ENCODE measurements at regions of chr10 and their contacts with region 1.

Region 1: DNA sequence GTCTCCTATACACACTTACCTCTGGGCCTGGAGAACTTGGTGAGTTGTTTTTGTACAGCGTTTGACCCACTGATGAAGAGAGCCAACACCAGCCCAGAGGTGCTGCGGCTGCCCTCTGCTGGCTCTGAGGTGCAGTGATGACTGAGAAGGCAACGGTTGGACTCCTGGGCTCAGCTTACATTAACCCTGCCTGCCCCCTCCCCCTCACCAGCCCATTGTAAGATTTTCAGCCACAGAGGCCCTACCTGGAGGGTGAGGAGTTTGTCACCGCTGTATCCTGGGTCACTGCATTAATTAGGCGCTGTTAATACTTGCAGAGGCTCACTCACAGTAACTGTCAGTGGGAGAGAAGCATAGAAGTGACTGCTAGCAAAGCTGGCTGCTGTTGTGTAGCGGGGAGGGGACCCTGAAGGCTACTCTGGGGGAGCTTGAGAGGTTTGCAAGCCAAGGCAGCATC is 19.0 kb upstream of the ANKRD2 start:
- DNase-seq: no peak
- H3K4me3 ChIP-seq: no peak overlapping the region
- H3K27ac ChIP-seq: no peak overlapping the region
- H3K27me3 ChIP-seq: no peaks in the 10 kb centered on the region
- CTCF ChIP-seq: peak; percentile 94

Region 2: DNA sequence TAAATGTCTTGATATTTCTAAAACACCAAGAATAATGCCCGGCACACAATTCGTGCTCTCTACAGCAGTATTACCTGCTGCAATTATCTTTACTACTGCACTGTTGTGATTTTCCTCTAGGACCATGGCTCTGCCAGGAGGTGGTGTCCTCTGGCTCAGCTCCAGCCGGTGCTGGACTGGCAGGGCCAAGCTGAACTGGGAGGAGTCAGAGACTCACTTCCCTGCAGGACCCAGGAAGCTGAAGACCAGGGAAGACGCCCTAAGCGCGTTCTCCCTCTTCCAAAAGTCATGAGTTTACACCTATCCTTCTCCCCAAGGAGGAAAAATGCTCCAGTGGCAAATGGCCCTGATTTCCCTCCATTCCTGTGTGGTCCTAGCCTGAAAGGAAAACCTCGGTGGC is 383.3 kb before region 1 on chr10:
- CTCF ChIA-PET with region 1: no interaction called
- POLR2A ChIA-PET with region 1: no interaction called
- DNase-seq: no peak
- H3K4me3 ChIP-seq: no peak overlapping the region
- H3K27ac ChIP-seq: no peak overlapping the region
- H3K27me3 ChIP-seq: peaks cover 18% of the 10 kb centered on the region
- CTCF ChIP-seq: no peak

Region 3: GRCh38 chr10:97463363-97464132 is 90.1 kb before region 1 on chr10:
- CTCF ChIA-PET with region 1: interaction called, 44 read pairs
- POLR2A ChIA-PET with region 1: interaction called, 4 read pairs
- DNase-seq: no peak
- H3K4me3 ChIP-seq: no peak overlapping the region
- H3K27ac ChIP-seq: peak overlapping the region; percentile 61
- H3K27me3 ChIP-seq: no peaks in the 10 kb centered on the region
- CTCF ChIP-seq: peak; percentile 88

Region 4: DNA sequence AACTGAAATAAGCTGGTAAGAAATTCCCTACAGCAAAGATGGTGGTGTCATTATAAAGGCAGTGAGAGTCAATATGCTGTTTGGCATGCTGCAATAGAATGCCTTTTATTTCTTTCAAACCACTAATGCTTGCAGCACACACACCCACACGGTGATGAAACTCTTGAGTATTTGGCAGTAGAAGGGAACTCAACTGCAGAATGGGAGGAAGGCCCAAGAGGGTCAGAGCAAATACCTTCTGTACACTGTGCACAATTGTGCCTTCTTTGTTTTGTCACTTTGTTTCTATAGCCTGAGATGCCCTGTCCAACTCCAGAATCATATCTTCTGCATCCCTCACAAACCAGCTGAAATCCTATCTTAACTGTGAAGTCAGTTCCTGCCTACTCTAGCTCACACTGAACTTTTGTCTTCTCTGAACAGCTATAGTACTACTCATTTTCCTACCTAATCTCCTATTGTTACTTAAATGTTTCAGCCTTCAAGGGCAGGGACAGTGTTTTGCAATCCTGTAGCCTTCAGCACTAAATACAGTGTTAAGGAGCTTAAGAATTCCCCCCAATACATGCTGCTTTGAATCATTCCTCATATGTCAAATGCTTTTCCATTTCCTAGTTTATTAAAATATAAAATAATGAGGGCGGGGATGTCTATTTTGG is 77.5 kb before region 1 on chr10:
- CTCF ChIA-PET with region 1: interaction called, 14 read pairs
- POLR2A ChIA-PET with region 1: no interaction called
- DNase-seq: no peak
- H3K4me3 ChIP-seq: no peak overlapping the region
- H3K27ac ChIP-seq: no peak overlapping the region
- H3K27me3 ChIP-seq: no peaks in the 10 kb centered on the region
- CTCF ChIP-seq: no peak

Region 5: DNA sequence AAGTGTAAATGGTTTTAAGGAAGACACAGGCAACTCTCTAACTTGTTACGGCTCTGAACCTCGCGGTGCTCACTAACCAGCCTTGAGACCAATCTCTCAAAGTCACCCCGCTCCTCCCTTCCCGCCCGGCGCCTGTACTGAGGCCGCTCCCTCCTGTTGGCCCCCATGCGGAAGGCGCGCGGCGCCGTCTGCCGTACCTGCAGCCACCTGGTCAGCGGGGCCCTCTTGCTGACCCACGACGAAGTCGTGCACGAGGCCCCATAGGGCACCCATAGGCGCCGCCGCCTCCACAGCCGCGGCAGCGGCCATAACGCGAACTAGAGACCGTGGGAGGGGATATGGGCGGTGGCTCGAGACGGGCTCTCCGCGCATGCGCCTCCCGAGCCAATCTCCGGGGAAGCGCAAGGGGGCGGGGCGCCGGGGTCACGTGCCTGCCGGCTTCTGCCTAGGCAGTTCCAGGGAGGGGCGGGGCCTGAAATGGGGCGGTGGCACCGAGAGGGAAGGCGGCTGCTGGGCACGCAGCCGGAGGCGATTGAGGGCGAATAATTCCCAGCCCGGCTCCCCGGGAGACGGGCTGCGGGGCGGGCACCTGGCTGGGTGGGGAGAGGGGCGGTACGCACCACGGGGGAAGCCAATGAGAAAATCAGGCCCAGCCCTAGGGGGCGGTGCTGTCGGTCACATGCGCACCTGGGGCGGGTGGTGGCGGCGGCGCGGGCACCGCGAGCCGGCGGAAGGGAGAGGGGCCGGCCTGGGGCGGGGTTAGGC is 55.3 kb before region 1 on chr10 and contains the start of gene MMS19:
- CTCF ChIA-PET with region 1: interaction called, 26 read pairs
- POLR2A ChIA-PET with region 1: interaction called, 10 read pairs
- DNase-seq: peak; percentile 96
- H3K4me3 ChIP-seq: peak within 1 kb of the TSS; percentile 78
- H3K27ac ChIP-seq: peak within 1 kb of the TSS; percentile 87
- H3K27me3 ChIP-seq: no peaks in the 10 kb centered on the region
- CTCF ChIP-seq: no peak
- polyA plus RNA-seq, gene MMS19: 71.5 and 80.2 TPM in 2 replicates

Region 6: GRCh38 chr10:97543025-97543575 is 10.5 kb before region 1 on chr10:
- CTCF ChIA-PET with region 1: interaction called, 30 read pairs
- POLR2A ChIA-PET with region 1: no interaction called
- DNase-seq: peak; percentile 84
- H3K4me3 ChIP-seq: peak overlapping the region; percentile 3; the same call in 1 of the 2 replicates
- H3K27ac ChIP-seq: peak overlapping the region; percentile 99
- H3K27me3 ChIP-seq: no peaks in the 10 kb centered on the region
- CTCF ChIP-seq: no peak

Region 7: DNA sequence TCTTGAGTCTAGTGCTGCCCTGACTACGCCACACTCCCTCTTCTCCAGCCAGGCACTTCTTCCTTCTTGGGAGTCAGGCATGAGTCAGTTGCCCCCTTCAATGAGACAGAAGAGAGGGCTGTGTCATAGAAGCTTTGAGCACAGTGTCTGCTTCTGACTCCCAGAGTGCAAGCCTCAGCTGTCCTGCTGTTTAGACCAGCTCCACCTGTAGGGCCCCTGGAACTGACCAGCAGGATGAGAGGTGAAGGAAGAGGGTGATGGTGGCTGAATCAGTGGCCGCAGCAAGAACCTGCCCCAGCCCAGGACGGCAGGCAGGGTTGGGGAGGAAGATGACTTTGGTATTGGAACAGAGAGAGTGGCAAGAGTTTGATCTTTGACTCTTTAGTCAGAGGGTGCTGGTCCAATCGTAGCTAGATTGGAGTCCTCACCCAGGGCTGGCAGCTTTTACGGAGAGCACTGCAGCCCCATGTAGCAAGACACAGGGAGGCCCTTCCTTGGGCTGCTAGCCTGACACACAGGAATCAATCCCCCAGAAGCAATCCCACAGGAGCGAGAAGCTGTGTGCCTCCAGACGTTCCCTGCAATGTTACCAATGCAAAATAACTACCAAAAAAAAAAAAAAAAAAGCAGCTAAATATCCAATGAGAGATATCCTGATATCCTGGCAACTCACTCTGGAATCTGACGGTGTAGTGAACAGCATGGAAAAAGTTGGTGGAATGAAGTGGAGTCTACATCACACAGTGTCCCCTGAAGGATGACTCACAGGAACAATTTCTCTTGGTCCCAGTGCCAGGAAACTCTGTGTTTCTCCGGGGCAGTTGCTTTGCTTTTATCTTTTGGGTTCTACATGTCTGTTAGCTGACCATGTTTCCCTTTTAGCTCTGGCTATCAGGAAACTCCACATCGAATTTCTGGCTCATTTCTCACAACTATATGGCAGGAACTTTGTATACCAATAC is 42.8 kb after region 1 on chr10:
- CTCF ChIA-PET with region 1: interaction called, 10 read pairs
- POLR2A ChIA-PET with region 1: no interaction called
- DNase-seq: peak; percentile 15
- H3K4me3 ChIP-seq: no peak overlapping the region
- H3K27ac ChIP-seq: peak overlapping the region; percentile 39
- H3K27me3 ChIP-seq: no peaks in the 10 kb centered on the region
- CTCF ChIP-seq: no peak

Measured in AG04450 (cell line).